SK-N-SH (cell line): ENCODE measurements at regions of chr13 and their contacts with region 1.

Region 1: GRCh38 chr13:43804461-43805070 is 17.8 kb upstream of the ENOX1 start:
- DNase-seq: peak; percentile 66
- H3K4me3 ChIP-seq: peak overlapping the region; percentile 27 to 57; a peak in 3 of 4 replicates
- H3K27ac ChIP-seq: peak overlapping the region; percentile 68 to 85
- H3K4me1 ChIP-seq: peaks cover 4 to 7% of the 10 kb centered on the region in 2 experiments; a peak in 3 of 4 replicates
- H3K27me3 ChIP-seq: no peaks in the 10 kb centered on the region
- CTCF ChIP-seq: peak; percentile 76
- EP300 ChIP-seq: no peak; a peak in 1 of 4 replicates
- RAD21 ChIP-seq: peak; percentile 86

Region 2: GRCh38 chr13:43085545-43085944 is 719.0 kb before region 1 on chr13:
- CTCF ChIA-PET with region 1: interaction called, 36 read pairs
- POLR2A ChIA-PET with region 1: no interaction called
- DNase-seq: peak; percentile 17
- H3K4me3 ChIP-seq: no peak overlapping the region
- H3K27ac ChIP-seq: no peak overlapping the region
- H3K4me1 ChIP-seq: no peaks in the 10 kb centered on the region; a peak in 1 of 4 replicates
- H3K27me3 ChIP-seq: no peaks in the 10 kb centered on the region
- CTCF ChIP-seq: peak; percentile 79
- EP300 ChIP-seq: no peak
- RAD21 ChIP-seq: peak; percentile 69

Region 3: GRCh38 chr13:43196086-43196621 is 608.4 kb before region 1 on chr13:
- CTCF ChIA-PET with region 1: interaction called, 24 read pairs
- POLR2A ChIA-PET with region 1: no interaction called
- DNase-seq: peak; percentile 70
- H3K4me3 ChIP-seq: no peak overlapping the region
- H3K27ac ChIP-seq: no peak overlapping the region
- H3K4me1 ChIP-seq: peaks cover 0 to 6% of the 10 kb centered on the region in 2 experiments; a peak in 2 of 4 replicates
- H3K27me3 ChIP-seq: no peaks in the 10 kb centered on the region
- CTCF ChIP-seq: no peak
- EP300 ChIP-seq: no peak
- RAD21 ChIP-seq: peak; percentile 72

Region 4: GRCh38 chr13:43303033-43303729 is 501.4 kb before region 1 on chr13:
- CTCF ChIA-PET with region 1: interaction called, 50 read pairs
- POLR2A ChIA-PET with region 1: no interaction called
- DNase-seq: peak; percentile 79
- H3K4me3 ChIP-seq: no peak overlapping the region; a peak in 1 of 4 replicates
- H3K27ac ChIP-seq: peak overlapping the region; percentile 62 to 64
- H3K4me1 ChIP-seq: peaks cover 25 to 64% of the 10 kb centered on the region in 2 experiments
- H3K27me3 ChIP-seq: no peaks in the 10 kb centered on the region
- CTCF ChIP-seq: peak; percentile 64
- EP300 ChIP-seq: peak in 1 of 2 experiments; percentile 28; a peak in 1 of 4 replicates
- RAD21 ChIP-seq: peak; percentile 95

Region 5: DNA sequence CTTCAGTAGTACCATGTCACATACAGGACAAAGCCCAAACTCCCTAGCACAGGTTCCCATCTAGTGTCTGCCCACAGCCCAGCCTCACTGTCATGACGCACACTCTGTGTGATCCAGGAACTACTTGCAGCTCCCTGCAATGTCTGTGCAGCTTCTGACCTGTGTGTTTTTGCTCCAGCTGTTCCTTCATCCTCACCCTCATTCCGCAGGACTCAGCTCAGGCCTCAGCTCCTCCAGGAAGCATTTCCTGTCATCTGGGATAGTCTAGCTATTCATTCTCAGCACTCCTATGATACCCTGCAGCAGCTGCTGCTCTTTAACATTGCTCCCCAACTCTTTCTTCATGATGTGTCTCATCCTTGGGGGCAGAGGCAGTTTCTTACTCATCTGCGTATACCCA is 73.9 kb before region 1 on chr13:
- CTCF ChIA-PET with region 1: no interaction called
- POLR2A ChIA-PET with region 1: no interaction called
- DNase-seq: no peak
- H3K4me3 ChIP-seq: no peak overlapping the region
- H3K27ac ChIP-seq: peak overlapping the region in 1 of 2 experiments; percentile 12; a peak in 1 of 4 replicates
- H3K4me1 ChIP-seq: peaks cover 3 to 8% of the 10 kb centered on the region in 2 experiments; a peak in 3 of 4 replicates
- H3K27me3 ChIP-seq: no peaks in the 10 kb centered on the region
- CTCF ChIP-seq: no peak
- EP300 ChIP-seq: no peak
- RAD21 ChIP-seq: no peak

Region 6: GRCh38 chr13:43787997-43788396 is 16.6 kb before region 1 on chr13:
- CTCF ChIA-PET with region 1: interaction called, 28 read pairs
- POLR2A ChIA-PET with region 1: no interaction called
- DNase-seq: peak; percentile 49
- H3K4me3 ChIP-seq: peak overlapping the region; percentile 72 to 73; a peak in 2 of 4 replicates
- H3K27ac ChIP-seq: no peak overlapping the region
- H3K4me1 ChIP-seq: peaks cover 0 to 23% of the 10 kb centered on the region in 2 experiments; a peak in 3 of 4 replicates
- H3K27me3 ChIP-seq: no peaks in the 10 kb centered on the region
- CTCF ChIP-seq: peak; percentile 59
- EP300 ChIP-seq: no peak
- RAD21 ChIP-seq: peak; percentile 51

Region 7: DNA sequence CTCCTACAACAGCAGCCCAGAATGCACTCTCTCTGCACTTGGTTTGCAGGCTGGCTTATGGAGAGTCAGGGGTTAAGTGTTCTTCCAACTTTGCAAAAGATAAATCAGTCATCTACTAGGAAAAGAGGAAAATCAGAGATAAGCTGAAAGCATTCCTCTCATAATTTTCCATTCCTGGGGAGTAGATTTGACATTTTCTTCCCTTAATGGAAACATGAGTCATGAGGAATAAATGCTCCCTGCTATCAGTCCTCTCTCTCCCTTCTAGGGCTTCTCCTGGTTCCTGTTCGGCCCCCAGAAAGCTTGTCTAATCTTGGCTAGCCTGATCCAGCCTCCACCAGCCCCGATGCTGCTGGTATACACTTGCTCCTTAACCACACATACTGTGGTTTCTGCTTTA is 10.6 kb after region 1 on chr13:
- CTCF ChIA-PET with region 1: interaction called, 27 read pairs
- POLR2A ChIA-PET with region 1: no interaction called
- DNase-seq: peak; percentile 20
- H3K4me3 ChIP-seq: no peak overlapping the region; a peak in 1 of 4 replicates
- H3K27ac ChIP-seq: peak overlapping the region; percentile 69 to 86; a peak in 3 of 4 replicates
- H3K4me1 ChIP-seq: peaks cover 0 to 24% of the 10 kb centered on the region in 2 experiments; a peak in 2 of 4 replicates
- H3K27me3 ChIP-seq: no peaks in the 10 kb centered on the region
- CTCF ChIP-seq: no peak
- EP300 ChIP-seq: peak; percentile 62 to 99; a peak in 3 of 4 replicates
- RAD21 ChIP-seq: no peak